Activated T-helper 1 cell treated with anti-CD3 and anti-CD28 coated beads, Interleukin-12 subunit alpha, Interleukin-12 subunit beta, Interleukin-2, Interleukin-4 antibody, amounts not matched to agents 30 ng/mL and 10 ng/mL and 1 ng/mL, durations not matched to agents 14 hours and 24 hours and 36 hours (primary cell): ENCODE measurements at regions of chr1 and their contacts with region 1.

Region 1: GRCh38 chr1:173202430-173203145 is 4.5 kb downstream of the TNFSF4 start:
- DNase-seq: no peak
- H3K4me3 Mint-ChIP-seq: no peak overlapping the region
- H3K27ac Mint-ChIP-seq: no peak overlapping the region
- H3K4me1 Mint-ChIP-seq: peaks cover 47% of the 10 kb centered on the region
- H3K27me3 Mint-ChIP-seq: peaks cover 16% of the 10 kb centered on the region

Region 2: GRCh38 chr1:172449585-172450534 is 752.7 kb before region 1 on chr1:
- intact Hi-C with region 1: loop called (anchors 2 kb)
- DNase-seq: peak; percentile 30
- H3K4me3 Mint-ChIP-seq: peak overlapping the region; percentile 43
- H3K27ac Mint-ChIP-seq: no peak overlapping the region
- H3K4me1 Mint-ChIP-seq: peaks cover 40% of the 10 kb centered on the region
- H3K27me3 Mint-ChIP-seq: peaks cover 2% of the 10 kb centered on the region

Region 3: GRCh38 chr1:172837816-172838680 is 364.5 kb before region 1 on chr1:
- intact Hi-C with region 1: loop called (anchors 1 kb)
- DNase-seq: peak; percentile 29
- H3K4me3 Mint-ChIP-seq: no peak overlapping the region
- H3K27ac Mint-ChIP-seq: peak overlapping the region; percentile 26
- H3K4me1 Mint-ChIP-seq: peaks cover 46% of the 10 kb centered on the region
- H3K27me3 Mint-ChIP-seq: peaks cover 65% of the 10 kb centered on the region

Region 4: GRCh38 chr1:172883107-172883791 is 319.3 kb before region 1 on chr1:
- intact Hi-C with region 1: loop called (anchors 5 kb)
- DNase-seq: no peak
- H3K4me3 Mint-ChIP-seq: no peak overlapping the region
- H3K27ac Mint-ChIP-seq: peak overlapping the region; percentile 46
- H3K4me1 Mint-ChIP-seq: peaks cover 14% of the 10 kb centered on the region
- H3K27me3 Mint-ChIP-seq: peaks cover 65% of the 10 kb centered on the region

Region 5: GRCh38 chr1:173212952-173213491 is 10.4 kb after region 1 on chr1:
- intact Hi-C with region 1: no loop called
- DNase-seq: no peak
- H3K4me3 Mint-ChIP-seq: no peak overlapping the region
- H3K27ac Mint-ChIP-seq: no peak overlapping the region
- H3K4me1 Mint-ChIP-seq: peaks cover 5% of the 10 kb centered on the region
- H3K27me3 Mint-ChIP-seq: peaks cover 9% of the 10 kb centered on the region

Region 6: GRCh38 chr1:173409613-173410012 is 207.0 kb after region 1 on chr1:
- intact Hi-C with region 1: loop called (anchors 5 kb)
- DNase-seq: no peak
- H3K4me3 Mint-ChIP-seq: no peak overlapping the region
- H3K27ac Mint-ChIP-seq: no peak overlapping the region
- H3K4me1 Mint-ChIP-seq: peaks cover 19% of the 10 kb centered on the region
- H3K27me3 Mint-ChIP-seq: peaks cover 4% of the 10 kb centered on the region

Region 7: GRCh38 chr1:174114788-174115448 is 912.3 kb after region 1 on chr1:
- intact Hi-C with region 1: no loop called
- DNase-seq: peak; percentile 3
- H3K4me3 Mint-ChIP-seq: no peak overlapping the region
- H3K27ac Mint-ChIP-seq: no peak overlapping the region
- H3K4me1 Mint-ChIP-seq: no peaks in the 10 kb centered on the region
- H3K27me3 Mint-ChIP-seq: peaks cover 10% of the 10 kb centered on the region